ENCODE measurements at regions of chr1 and their contacts with region 1.

Region 1: DNA sequence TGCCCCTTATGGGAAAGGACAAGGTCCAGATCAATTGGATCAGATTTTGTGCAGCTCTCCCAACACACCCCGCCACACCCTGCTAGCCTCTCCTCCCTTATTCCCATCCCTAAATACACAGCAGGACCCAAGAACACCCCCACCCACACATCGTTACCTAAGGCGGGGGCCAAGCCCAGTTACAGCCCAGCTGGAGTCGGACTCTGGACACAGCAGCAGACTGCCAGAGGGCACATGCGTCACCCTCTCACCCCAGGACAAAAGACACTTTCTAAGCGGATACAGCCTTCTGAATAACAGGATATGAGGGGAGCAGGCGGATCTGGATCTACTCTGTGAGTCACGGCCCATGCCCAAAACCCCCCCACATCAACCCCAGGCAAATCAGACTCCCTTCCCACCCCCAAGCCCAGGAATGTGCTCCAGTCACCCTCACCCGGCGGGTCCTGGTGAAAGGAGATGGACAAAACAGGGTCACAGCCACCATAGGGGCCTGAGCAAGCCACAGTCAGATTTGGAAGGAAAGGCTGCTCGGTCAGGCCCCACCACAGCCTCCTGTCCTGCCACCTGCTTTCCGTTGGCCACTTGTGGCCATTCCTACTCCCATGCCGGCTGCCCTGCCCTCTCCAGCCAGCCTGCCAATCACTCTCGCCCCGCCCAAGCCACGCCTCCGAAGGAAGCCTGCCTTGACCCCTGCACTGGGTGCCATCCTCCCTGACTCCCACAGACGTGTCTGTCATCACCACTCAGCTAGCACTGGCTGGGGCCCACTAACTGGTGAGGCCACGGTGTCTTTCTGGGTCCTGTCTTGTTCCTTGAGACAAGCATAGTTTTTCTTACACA is 4.0 kb downstream of the S100A16 start:
- DNase-seq: peak; percentile 91
- H3K4me3 Mint-ChIP-seq: peak overlapping the region; percentile 90
- H3K27ac Mint-ChIP-seq: peak overlapping the region; percentile 71
- H3K4me1 Mint-ChIP-seq: peaks cover 53% of the 10 kb centered on the region
- H3K27me3 Mint-ChIP-seq: no peaks in the 10 kb centered on the region
- CTCF ChIP-seq: no peak

Region 2: GRCh38 chr1:153633716-153634665 is 25.0 kb after region 1 on chr1 and contains the start of gene CHTOP:
- CTCF ChIA-PET with region 1: interaction called, 99 read pairs
- intact Hi-C with region 1: no loop called
- DNase-seq: peak; percentile 99
- H3K4me3 Mint-ChIP-seq: peak within 1 kb of the TSS; percentile 98
- H3K27ac Mint-ChIP-seq: peak within 1 kb of the TSS; percentile 98
- H3K4me1 Mint-ChIP-seq: peaks cover 44% of the 10 kb centered on the region
- H3K27me3 Mint-ChIP-seq: no peaks in the 10 kb centered on the region
- CTCF ChIP-seq: no peak
- total RNA-seq, gene CHTOP: 93.7 and 100 TPM in 2 replicates

Region 3: GRCh38 chr1:153922076-153922971 is 313.4 kb after region 1 on chr1:
- CTCF ChIA-PET with region 1: no interaction called
- intact Hi-C with region 1: no loop called
- DNase-seq: peak; percentile 78
- H3K4me3 Mint-ChIP-seq: peak overlapping the region; percentile 74
- H3K27ac Mint-ChIP-seq: peak overlapping the region; percentile 91
- H3K4me1 Mint-ChIP-seq: peaks cover 33% of the 10 kb centered on the region
- H3K27me3 Mint-ChIP-seq: no peaks in the 10 kb centered on the region
- CTCF ChIP-seq: no peak